Vagina (tissue), 2 donors: ENCODE measurements at regions of chr22 and their contacts with region 1.

Region 1: DNA sequence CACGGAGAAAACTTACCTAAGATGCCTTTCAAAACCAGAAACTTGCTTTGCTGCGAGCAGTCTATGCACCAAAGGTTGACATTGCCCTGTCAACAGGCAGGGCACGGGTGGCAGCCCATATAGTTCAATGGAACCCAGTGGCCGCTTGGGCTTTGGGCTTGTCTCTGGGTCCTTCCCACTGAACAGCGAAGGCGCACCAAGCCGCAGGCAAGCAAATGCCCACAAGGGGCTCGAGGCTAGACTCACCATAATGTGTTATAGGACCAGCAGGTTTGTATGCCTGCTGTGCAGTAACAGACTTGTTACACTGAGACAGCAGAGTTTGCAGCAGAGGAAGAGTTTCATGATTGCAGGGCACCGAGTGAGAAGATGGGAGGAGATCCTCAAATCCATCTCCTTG is 20.3 kb downstream of the CLDN5 start:
- DNase-seq: no peak
- H3K4me3 ChIP-seq: no peak overlapping the region
- H3K27ac ChIP-seq: no peak overlapping the region
- H3K4me1 ChIP-seq: no peaks in the 10 kb centered on the region
- H3K27me3 ChIP-seq: no peaks in the 10 kb centered on the region
- CTCF ChIP-seq: no peak
- POLR2A ChIP-seq: no peak

Region 2: DNA sequence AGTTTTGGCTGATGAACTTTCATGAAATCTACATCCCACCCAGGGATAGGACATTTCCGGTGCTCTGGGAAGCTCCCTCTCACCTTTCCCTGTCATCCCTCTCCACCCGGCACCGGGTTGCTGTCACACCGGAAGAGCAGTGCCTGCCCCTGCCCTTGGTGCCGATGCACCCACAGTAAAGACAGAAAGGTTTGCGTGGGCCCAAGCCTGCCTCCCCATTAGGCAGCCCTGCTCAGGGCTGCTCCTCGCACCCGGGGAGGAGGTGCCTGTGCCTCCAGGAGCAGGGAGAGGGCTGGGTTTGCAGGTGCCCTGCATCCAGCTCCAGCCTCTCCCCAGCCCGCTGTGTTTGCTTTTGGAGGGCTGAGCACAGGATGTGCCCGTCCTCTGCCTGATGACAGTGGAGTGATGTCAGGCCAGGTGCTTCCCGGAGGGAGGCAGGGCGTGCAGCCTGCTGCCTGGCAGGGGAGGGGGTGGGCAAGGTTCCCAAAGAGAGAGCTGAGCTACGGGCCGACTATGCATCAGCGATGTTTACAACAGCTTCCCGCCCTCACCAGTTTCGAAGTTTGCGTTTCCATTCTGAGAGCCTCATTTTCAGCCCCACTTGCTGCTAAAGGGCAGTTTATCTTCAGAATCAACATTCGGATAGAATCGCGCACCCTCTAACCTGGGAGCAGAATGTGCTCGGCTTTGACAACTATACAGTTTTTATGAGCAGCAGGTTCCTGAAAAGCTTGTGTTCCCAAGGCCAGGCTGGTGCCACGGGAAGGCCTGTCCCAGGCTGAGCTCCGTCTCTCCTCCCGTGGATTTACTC is 103.5 kb after region 1 on chr22:
- intact Hi-C with region 1: loop called (anchors 10 kb)
- DNase-seq: no peak
- H3K4me3 ChIP-seq: no peak overlapping the region
- H3K27ac ChIP-seq: peak overlapping the region; percentile 22
- H3K4me1 ChIP-seq: peaks cover 8% of the 10 kb centered on the region
- H3K27me3 ChIP-seq: no peaks in the 10 kb centered on the region
- CTCF ChIP-seq: no peak
- POLR2A ChIP-seq: no peak